ENCODE measurements at regions of chr2 and their contacts with region 1.

Region 1: DNA sequence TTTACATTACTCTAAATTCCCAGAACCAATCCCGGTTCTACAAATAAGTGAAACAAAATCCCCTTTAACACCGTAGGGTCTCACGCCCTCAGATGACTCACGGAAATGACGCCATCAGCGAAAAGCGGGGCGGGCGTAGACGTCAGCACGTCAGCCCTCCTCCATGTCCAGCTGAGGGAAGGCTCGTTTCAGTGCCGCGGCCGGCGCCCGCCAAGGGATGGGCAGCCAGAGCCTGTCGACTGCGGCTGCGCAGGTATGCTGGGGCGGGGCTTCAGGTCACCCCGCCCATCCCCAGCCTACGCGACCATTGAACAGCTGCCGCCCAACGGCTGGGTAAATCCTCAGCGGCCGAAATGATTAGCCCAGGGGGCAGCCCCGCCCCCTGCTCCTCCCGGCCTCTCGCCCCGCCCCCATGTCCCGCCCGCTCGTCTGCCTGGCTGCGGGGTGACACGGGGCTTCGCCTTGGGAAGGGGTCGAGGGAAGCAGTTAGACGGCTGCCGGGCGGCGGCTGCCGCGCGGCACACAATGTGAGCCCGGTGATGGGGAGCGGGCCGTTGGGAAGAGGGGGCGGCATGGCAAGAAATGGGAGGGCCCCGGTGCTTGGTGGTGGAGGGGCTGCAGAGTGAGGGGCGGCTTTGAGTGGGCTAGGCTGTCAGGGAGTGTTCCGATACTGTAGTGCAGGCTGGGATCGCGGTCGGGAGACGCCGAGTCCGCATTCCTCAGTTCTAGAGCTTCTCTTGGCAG is at the start of gene NBEAL1:
- DNase-seq: peak; percentile 100
- H3K4me3 ChIP-seq: peak within 1 kb of the TSS; percentile 56 to 96 (median 92)
- H3K27ac ChIP-seq: peak within 1 kb of the TSS; percentile 93
- H3K4me1 ChIP-seq: peaks cover 22% of the 10 kb centered on the region
- H3K27me3 ChIP-seq: peaks cover 8 to 13% of the 10 kb centered on the region in 2 experiments
- CTCF ChIP-seq: no peak
- POLR2A ChIP-seq: peak; percentile 66
- total RNA-seq, gene NBEAL1: 23.3 and 23.4 TPM in 2 replicates

Region 2: DNA sequence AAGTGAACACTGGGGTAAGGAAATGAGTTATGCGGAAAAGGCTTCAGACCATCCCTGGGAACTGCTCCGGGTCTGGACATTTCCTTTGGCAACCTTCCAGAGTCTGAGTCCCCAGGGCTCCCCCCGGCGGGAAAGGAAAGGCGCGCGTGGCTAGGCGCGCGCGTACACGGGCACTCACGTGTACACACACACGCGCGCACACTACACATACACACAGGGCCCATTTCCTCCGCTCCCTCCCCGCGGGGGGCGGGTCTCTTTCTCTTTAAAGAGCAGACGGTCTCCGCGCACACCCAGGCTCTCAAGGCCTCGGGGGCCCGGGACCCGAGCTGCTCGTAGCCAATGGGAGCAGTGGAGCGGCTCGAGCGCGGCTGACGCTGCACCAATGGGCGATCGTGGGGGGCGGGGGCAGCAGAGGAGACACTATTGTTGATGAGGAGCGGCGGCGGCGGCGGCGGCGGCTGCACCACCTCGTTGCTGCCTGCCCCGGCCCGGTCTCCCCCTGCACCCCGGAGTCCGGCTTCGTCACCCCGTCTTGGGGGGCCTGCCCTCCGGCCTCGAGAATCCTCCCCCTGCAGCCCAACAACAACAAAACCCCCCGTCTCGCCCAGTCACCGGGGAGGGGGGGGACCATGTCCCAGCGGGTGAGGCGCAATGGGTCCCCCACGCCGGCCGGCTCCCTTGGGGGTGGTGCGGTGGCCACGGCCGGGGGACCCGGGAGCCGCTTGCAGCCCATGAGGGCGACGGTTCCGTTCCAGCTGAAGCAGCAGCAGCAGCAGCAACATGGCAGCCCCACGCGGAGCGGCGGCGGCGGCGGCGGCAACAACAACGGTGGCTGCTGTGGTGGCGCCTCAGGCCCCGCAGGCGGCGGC is 379.8 kb before region 1 on chr2 and contains the start of gene FAM117B:
- CTCF ChIA-PET with region 1: no interaction called
- POLR2A ChIA-PET with region 1: no interaction called
- dilution Hi-C with region 1: no loop called
- intact Hi-C with region 1: loop called (anchors 10 kb)
- DNase-seq: peak; percentile 96
- H3K4me3 ChIP-seq: peak within 1 kb of the TSS; percentile 65 to 85 (median 70)
- H3K27ac ChIP-seq: peak within 1 kb of the TSS; percentile 34
- H3K4me1 ChIP-seq: peaks cover 17% of the 10 kb centered on the region
- H3K27me3 ChIP-seq: no peaks in the 10 kb centered on the region
- CTCF ChIP-seq: peak in 1 of 2 donors; percentile 6
- POLR2A ChIP-seq: no peak
- total RNA-seq, gene FAM117B: 5.7 and 7.0 TPM in 2 replicates

Region 3: DNA sequence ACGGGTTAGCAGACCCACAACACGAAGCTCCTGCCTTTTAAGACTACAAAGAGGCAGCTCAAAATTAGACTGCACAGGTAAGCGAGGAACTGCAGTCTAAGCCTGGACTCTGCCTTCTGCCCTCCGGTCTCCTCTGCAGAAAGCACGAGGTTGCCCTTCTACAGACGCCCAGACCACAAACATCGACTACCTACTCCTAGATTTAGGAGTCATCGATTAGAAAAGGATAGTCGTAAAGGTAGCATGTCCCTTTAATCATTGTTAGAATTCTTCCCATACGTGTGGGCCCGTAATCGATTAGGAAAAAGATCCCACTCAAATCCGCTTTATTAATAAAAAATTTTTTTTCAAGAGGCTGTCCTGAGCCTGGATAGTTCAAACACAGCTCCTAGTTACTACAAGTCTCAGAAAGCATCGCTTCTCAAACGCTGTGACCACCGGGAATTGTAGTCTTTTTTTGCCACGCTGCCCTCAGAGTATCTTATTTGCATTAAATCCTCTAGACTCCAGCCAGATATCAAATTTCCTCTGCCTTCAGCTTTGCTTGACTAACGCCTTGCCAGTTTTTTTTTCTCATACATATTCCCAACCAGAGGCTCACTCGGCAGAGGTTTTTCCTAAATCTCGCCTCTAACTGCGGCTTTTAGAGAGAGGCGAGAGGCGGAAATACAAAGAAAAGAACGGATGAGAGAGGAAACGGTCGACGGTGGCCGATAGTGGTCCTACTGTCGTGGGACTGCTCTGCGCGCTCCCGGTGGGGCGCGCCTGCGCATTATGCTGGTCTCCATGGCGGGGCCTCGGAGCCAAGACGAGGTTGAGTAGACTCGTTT is 102.9 kb before region 1 on chr2 and contains the starts of genes CARF and WDR12:
- CTCF ChIA-PET with region 1: no interaction called
- POLR2A ChIA-PET with region 1: no interaction called
- dilution Hi-C with region 1: no loop called
- intact Hi-C with region 1: loop called (anchors 1 kb)
- DNase-seq: peak; percentile 96
- H3K4me3 ChIP-seq: peak within 1 kb of the TSS; percentile 84 to 97 (median 97)
- H3K27ac ChIP-seq: peak within 1 kb of the TSS; percentile 86
- H3K4me1 ChIP-seq: peaks cover 7% of the 10 kb centered on the region
- H3K27me3 ChIP-seq: no peaks in the 10 kb centered on the region
- CTCF ChIP-seq: no peak
- POLR2A ChIP-seq: peak; percentile 78
- total RNA-seq, gene CARF: 3.2 and 3.7 TPM in 2 replicates
- total RNA-seq, gene WDR12: 65.6 and 67.1 TPM in 2 replicates

Region 4: DNA sequence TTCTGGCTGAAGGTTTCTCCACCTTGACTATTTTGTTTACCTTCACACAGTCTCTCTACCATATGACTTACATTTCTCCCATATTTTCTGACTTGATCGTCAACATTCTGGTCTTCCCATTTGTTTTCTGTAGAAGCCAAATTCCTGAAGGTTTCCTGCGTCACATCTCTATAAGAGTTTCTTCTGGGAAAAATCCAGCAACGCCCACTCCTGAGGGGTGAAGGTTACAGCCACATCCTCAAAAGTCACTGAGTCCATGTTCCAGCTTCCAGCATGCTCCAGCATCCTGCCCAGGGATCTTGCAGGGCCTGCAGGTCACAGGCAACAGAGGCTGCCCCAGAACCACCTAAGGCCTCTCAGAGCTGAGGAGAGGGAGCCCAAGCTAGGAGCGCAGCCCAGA is 47.5 kb after region 1 on chr2:
- CTCF ChIA-PET with region 1: no interaction called
- POLR2A ChIA-PET with region 1: no interaction called
- dilution Hi-C with region 1: no loop called
- intact Hi-C with region 1: no loop called
- DNase-seq: no peak
- H3K4me3 ChIP-seq: no peak overlapping the region
- H3K27ac ChIP-seq: no peak overlapping the region
- H3K4me1 ChIP-seq: no peaks in the 10 kb centered on the region
- H3K27me3 ChIP-seq: no peaks in the 10 kb centered on the region
- CTCF ChIP-seq: no peak
- POLR2A ChIP-seq: no peak

Region 5: GRCh38 chr2:203105996-203106395 is 91.4 kb after region 1 on chr2:
- CTCF ChIA-PET with region 1: no interaction called
- POLR2A ChIA-PET with region 1: no interaction called
- dilution Hi-C with region 1: no loop called
- intact Hi-C with region 1: loop called (anchors 5 kb)
- DNase-seq: peak; percentile 81
- H3K4me3 ChIP-seq: no peak overlapping the region
- H3K27ac ChIP-seq: peak overlapping the region; percentile 37
- H3K4me1 ChIP-seq: peaks cover 16% of the 10 kb centered on the region
- H3K27me3 ChIP-seq: no peaks in the 10 kb centered on the region
- CTCF ChIP-seq: no peak
- POLR2A ChIP-seq: no peak

Measured in endothelial cell of umbilical vein (primary cell).